ENCODE measurements at regions of chr7 and their contacts with region 1.

Region 1: DNA sequence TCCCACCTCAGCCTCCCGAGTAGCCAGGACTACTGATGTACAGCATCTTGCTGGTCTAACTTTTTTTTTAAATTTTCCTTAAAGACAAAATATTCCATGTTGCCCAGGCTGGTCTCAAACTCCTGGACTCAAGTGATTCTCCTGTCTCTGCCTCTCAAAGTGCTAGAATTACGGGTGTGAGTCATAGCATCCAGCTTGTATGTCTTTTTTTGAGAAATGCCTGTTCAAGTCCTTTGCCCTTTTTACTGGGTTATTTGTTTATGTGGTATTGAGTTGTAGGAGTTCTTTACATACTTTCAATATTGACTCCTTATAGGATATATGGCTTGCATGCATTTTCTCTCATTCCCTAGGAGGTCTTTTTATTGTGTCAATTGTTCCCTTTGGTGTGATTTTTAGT is 486.4 kb downstream of the MAGI2 start:
- DNase-seq: no peak
- ATAC-seq: no peak
- H3K4me3 ChIP-seq: no peak overlapping the region
- H3K27ac ChIP-seq: no peak overlapping the region
- H3K4me1 ChIP-seq: no peaks in the 10 kb centered on the region
- H3K27me3 ChIP-seq: no peaks in the 10 kb centered on the region
- CTCF ChIP-seq: no peak
- EP300 ChIP-seq: no peak
- POLR2A ChIP-seq: no peak
- RAD21 ChIP-seq: no peak

Region 2: DNA sequence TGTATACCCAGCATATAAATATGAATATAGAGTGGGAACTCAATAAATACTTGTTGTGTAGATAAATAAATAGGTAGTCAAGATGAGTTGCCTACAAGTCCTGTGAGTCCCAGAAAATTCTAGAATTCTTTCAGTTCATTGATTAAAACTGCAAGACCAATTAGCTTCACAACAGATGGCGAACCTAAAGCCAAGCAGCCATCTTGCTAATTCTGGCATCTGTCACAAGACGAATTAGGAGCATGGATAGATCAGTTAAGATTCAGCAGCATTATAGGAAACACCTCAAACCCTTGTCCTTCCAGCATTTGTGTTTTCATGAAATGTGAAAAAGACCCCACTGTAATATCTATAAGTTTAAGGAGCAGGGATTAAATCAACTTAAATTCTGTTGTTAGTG is 66.2 kb before region 1 on chr7:
- CTCF ChIA-PET with region 1: no interaction called
- POLR2A ChIA-PET with region 1: no interaction called
- in situ Hi-C with region 1: no loop called
- intact Hi-C with region 1: loop called (anchors 10 kb)
- DNase-seq: no peak
- ATAC-seq: no peak
- H3K4me3 ChIP-seq: no peak overlapping the region
- H3K27ac ChIP-seq: no peak overlapping the region
- H3K4me1 ChIP-seq: no peaks in the 10 kb centered on the region
- H3K27me3 ChIP-seq: no peaks in the 10 kb centered on the region
- CTCF ChIP-seq: no peak
- EP300 ChIP-seq: no peak
- POLR2A ChIP-seq: no peak
- RAD21 ChIP-seq: no peak

Region 3: GRCh38 chr7:79078273-79078672 is 111.2 kb after region 1 on chr7:
- CTCF ChIA-PET with region 1: no interaction called
- POLR2A ChIA-PET with region 1: no interaction called
- in situ Hi-C with region 1: no loop called
- intact Hi-C with region 1: no loop called
- DNase-seq: no peak
- ATAC-seq: no peak
- H3K4me3 ChIP-seq: no peak overlapping the region
- H3K27ac ChIP-seq: no peak overlapping the region
- H3K4me1 ChIP-seq: no peaks in the 10 kb centered on the region
- H3K27me3 ChIP-seq: no peaks in the 10 kb centered on the region
- CTCF ChIP-seq: no peak
- EP300 ChIP-seq: no peak
- POLR2A ChIP-seq: no peak
- RAD21 ChIP-seq: no peak

Measured in K562 (cell line).